Activated CD4-positive, alpha-beta memory T cell treated with anti-CD3 and anti-CD28 coated beads for 36 hours (primary cell): ENCODE measurements at regions of chr14 and their contacts with region 1.

Region 1: DNA sequence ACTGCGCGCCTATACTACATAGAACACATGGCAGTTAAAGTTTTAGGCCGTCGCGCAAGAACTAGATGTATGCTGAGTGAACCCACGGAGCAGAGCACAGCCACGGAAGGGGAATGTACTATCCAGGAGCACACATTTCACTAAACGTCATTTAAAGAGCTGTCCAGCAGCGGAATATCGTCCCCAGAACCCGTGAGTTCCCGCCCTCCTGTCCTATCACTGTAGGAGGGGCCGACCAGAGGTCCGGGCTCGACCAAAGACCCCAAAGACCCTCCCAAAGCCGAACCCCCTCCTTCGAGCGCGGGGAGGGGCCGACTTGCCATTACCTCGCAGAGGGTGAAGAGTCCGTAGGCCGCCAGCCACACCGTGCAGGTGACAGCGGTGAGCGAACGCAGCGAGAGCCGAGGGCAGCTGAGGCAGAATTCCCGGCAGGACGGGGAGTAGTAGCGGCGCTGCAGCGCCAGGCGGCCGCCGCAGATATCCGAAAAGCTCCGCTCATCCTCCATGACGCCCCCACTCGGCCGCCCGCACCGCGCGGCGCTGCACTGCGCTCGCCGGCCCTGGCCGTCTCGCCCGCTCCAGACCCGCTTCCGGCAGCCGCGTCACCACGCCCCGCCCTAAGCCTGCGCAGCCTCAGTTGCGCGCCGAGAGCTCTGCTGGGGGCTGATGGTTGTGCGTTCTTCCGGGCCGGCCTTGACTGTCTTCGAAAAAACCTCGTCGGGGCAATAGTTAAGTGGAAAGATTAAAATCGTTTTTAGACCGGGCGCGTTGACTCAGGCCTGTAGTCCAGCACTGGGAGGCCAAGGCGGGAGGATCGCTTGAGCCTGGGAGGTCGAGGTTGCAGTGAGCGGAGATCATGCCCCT is at the start of gene PIGH:
- DNase-seq: peak; percentile 96
- H3K4me3 Mint-ChIP-seq: peak within 1 kb of the TSS; percentile 95
- H3K27ac Mint-ChIP-seq: peak within 1 kb of the TSS; percentile 88
- H3K4me1 Mint-ChIP-seq: peaks cover 34% of the 10 kb centered on the region
- H3K27me3 Mint-ChIP-seq: no peaks in the 10 kb centered on the region
- total RNA-seq, gene PIGH: 13.1 to 17.1 TPM

Region 2: DNA sequence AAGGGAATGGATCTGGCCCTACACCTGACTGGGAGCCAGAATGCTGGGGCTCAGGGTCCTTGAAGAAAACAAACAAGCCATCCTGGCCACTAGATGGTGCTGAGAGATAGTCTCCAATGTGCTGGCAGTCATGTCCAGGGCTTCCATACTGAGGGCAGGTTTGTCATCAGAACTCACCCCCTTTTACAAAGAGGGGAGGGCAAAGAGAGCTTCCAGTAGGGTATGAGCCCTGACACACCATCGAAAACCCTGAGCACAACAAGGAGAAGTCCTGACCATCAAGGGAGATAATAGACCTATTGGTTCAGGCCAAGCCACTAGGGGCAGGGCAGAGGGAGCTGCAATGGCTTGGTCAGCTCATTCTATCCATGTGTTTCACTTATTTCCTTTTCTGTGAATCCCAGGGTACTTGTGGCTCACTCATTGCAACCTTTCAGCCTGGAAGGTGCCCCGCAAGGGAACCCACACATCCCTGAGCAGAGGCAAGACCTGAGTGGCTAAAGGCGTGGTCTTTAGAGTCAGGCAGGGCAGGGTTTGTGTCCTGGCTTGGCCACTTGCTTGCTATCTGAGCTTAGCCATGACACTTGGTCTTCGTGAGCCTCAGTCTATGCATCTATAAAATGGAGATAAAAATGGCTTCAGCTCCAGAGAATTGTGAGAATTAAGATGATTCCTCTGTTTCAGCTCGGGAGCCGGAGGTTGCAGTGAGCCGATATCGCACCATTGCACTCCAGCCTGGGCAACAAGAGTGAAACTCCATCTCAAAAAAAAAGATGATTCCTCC is 73.1 kb before region 1 on chr14:
- CTCF ChIA-PET with region 1: interaction called, 10 read pairs
- POLR2A ChIA-PET with region 1: no interaction called
- intact Hi-C with region 1: no loop called
- DNase-seq: peak; percentile 52
- H3K4me3 Mint-ChIP-seq: no peak overlapping the region
- H3K27ac Mint-ChIP-seq: no peak overlapping the region
- H3K4me1 Mint-ChIP-seq: peaks cover 3% of the 10 kb centered on the region
- H3K27me3 Mint-ChIP-seq: peaks cover 22% of the 10 kb centered on the region

Region 3: DNA sequence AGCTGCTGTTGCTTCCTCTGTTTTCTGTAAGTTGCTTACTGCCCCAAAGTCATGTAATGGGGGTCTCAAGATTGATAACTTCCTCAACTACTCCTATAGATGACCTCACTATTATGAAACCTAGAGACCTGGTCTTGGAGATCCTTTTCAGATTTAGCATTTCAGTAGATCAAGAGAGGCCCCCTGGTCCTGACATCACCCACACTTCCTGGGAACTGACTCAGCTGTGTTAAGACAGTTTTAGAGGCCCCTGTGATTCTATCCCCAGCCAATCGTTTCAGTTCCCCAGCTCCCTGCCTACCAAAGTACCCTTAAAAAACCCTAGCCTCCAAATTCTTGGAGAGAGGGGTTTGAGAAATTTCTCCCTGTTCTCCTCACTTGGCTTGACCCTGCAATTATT is 10.6 kb after region 1 on chr14:
- CTCF ChIA-PET with region 1: interaction called, 16 read pairs
- POLR2A ChIA-PET with region 1: interaction called, 5 read pairs
- intact Hi-C with region 1: no loop called
- DNase-seq: peak; percentile 35
- H3K4me3 Mint-ChIP-seq: no peak overlapping the region
- H3K27ac Mint-ChIP-seq: no peak overlapping the region
- H3K4me1 Mint-ChIP-seq: peaks cover 6% of the 10 kb centered on the region
- H3K27me3 Mint-ChIP-seq: peaks cover 2% of the 10 kb centered on the region

Region 4: GRCh38 chr14:67666750-67667449 is 67.0 kb after region 1 on chr14:
- CTCF ChIA-PET with region 1: interaction called, 17 read pairs
- POLR2A ChIA-PET with region 1: no interaction called
- intact Hi-C with region 1: loop called (anchors 5 kb)
- DNase-seq: peak; percentile 20
- H3K4me3 Mint-ChIP-seq: no peak overlapping the region
- H3K27ac Mint-ChIP-seq: no peak overlapping the region
- H3K4me1 Mint-ChIP-seq: peaks cover 56% of the 10 kb centered on the region
- H3K27me3 Mint-ChIP-seq: no peaks in the 10 kb centered on the region

Region 5: GRCh38 chr14:67704484-67705089 is 104.7 kb after region 1 on chr14:
- CTCF ChIA-PET with region 1: interaction called, 33 read pairs
- POLR2A ChIA-PET with region 1: no interaction called
- intact Hi-C with region 1: no loop called
- DNase-seq: peak; percentile 24
- H3K4me3 Mint-ChIP-seq: no peak overlapping the region
- H3K27ac Mint-ChIP-seq: no peak overlapping the region
- H3K4me1 Mint-ChIP-seq: peaks cover 2% of the 10 kb centered on the region
- H3K27me3 Mint-ChIP-seq: peaks cover 3% of the 10 kb centered on the region